ENCODE measurements at regions of chr6 and their contacts with region 1.

Region 1: GRCh38 chr6:155530219-155530834 is 74.7 kb upstream of the NOX3 start:
- DNase-seq: no peak
- ATAC-seq: peak in 2 of 8 donors; percentile 55 to 62
- H3K4me3 ChIP-seq: no peak overlapping the region
- H3K27ac ChIP-seq: no peak overlapping the region
- H3K4me1 ChIP-seq: peaks cover 0 to 19% (median 12%) of the 10 kb centered on the region in 9 donors
- H3K27me3 ChIP-seq: no peaks in the 10 kb centered on the region
- CTCF ChIP-seq: peak; percentile 23 to 78 (median 64)

Region 2: GRCh38 chr6:155188707-155189496 is 341.4 kb before region 1 on chr6:
- intact Hi-C with region 1: loop called in 1 of 10 experiments (anchors 10 kb)
- DNase-seq: no peak
- ATAC-seq: peak in 6 of 8 donors; percentile 20 to 59 (median 36)
- H3K4me3 ChIP-seq: peak overlapping the region in 3 of 10 donors; percentile 5 to 9 (median 8)
- H3K27ac ChIP-seq: peak overlapping the region in 6 of 10 donors; percentile 1 to 61 (median 30)
- H3K4me1 ChIP-seq: peaks cover 0 to 53% (median 22%) of the 10 kb centered on the region in 9 donors
- H3K27me3 ChIP-seq: no peaks in the 10 kb centered on the region
- CTCF ChIP-seq: no peak

Region 3: DNA sequence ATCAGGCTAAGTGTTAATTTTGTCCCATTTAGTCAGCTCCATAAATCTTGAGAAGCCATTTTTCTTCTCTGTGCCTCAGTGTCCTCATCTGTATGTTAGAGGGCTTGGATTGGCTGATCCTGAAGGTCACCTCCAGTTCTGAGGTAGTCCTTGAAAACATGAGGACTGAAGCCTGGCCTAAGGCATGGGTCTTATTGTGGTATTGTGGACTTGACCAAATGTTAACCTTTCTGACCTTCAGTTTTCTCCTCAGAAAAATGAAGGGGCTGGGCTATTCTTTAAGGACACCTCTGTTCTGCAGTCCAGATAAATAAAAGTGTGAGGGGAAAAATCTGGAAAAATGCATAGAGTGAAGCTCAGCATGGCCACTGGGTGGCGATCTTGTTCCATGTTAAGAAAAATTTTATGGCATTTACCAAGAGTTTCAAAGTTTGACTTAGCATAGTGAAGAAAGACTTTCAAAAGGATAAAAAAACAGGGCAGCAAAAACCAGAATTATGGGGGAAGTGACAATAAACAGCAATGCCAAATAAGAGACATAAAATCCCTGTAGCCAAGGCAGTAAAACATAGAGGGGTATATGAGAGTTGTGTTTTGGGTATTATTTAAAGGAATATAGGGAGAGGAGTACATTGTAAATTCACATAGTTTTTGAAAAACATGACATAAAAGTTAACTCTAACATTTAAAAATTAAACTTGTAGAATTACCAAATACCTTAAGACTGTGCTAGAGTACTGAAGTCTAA is 202.8 kb before region 1 on chr6:
- intact Hi-C with region 1: loop called (anchors 1 to 10 kb)
- DNase-seq: peak; percentile 34 to 46
- ATAC-seq: peak in 6 of 8 donors; percentile 38 to 66 (median 60)
- H3K4me3 ChIP-seq: no peak overlapping the region
- H3K27ac ChIP-seq: no peak overlapping the region
- H3K4me1 ChIP-seq: no peaks in the 10 kb centered on the region
- H3K27me3 ChIP-seq: no peaks in the 10 kb centered on the region
- CTCF ChIP-seq: peak; percentile 63 to 89 (median 82)

Region 4: DNA sequence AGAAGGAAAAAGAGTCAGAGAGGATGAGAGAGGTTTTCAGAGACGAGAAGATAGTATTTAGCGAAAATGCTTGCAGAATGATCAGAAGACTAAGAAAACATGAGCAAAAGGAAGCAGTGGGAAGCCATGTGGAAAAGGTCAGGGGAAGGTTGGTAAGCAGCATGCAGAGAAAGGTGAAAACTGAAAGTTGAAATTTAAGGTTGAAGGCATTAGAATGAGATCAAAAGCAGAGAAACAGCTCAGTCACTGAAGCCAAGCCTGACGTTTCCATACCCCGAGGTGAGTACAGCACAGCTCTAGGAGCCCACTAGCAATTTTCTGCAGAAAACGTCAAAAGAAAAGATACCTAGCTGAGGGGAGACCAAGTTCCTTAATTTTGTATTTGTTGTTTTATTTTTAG is 196.9 kb before region 1 on chr6:
- intact Hi-C with region 1: loop called in 8 of 10 experiments (anchors 2 to 10 kb)
- DNase-seq: no peak
- ATAC-seq: no peak
- H3K4me3 ChIP-seq: no peak overlapping the region
- H3K27ac ChIP-seq: no peak overlapping the region
- H3K4me1 ChIP-seq: no peaks in the 10 kb centered on the region
- H3K27me3 ChIP-seq: no peaks in the 10 kb centered on the region
- CTCF ChIP-seq: no peak

Region 5: GRCh38 chr6:155436981-155437749 is 93.2 kb before region 1 on chr6:
- intact Hi-C with region 1: no loop called
- DNase-seq: peak in 1 of 2 donors; percentile 41
- ATAC-seq: peak in 6 of 8 donors; percentile 42 to 72 (median 64)
- H3K4me3 ChIP-seq: no peak overlapping the region
- H3K27ac ChIP-seq: no peak overlapping the region
- H3K4me1 ChIP-seq: peaks cover 0 to 10% (median 0%) of the 10 kb centered on the region in 9 donors
- H3K27me3 ChIP-seq: no peaks in the 10 kb centered on the region
- CTCF ChIP-seq: no peak

Region 6: DNA sequence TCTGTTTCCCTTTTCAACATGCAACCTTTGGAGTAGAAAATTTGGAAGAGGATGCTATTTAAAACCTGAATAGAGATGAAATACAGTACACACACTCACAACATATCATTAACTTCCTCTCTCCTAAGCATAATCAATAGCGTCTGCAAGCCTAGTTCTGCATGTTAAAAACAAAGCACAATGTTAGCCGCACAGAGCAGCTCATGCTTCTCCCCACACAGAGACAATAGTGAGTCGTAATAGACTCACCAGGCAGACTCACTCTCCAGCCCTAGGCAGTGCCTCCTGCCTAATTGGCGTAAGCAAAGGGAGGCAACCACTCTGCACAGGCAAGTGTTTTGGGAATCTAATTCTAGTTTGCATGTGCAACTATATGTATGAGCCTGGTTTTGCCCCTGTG is 1201.1 kb after region 1 on chr6:
- intact Hi-C with region 1: loop called in 1 of 10 experiments (anchors 10 kb)
- DNase-seq: no peak
- ATAC-seq: no peak
- H3K4me3 ChIP-seq: no peak overlapping the region
- H3K27ac ChIP-seq: no peak overlapping the region
- H3K4me1 ChIP-seq: no peaks in the 10 kb centered on the region
- H3K27me3 ChIP-seq: no peaks in the 10 kb centered on the region
- CTCF ChIP-seq: no peak